HEK293 (cell line): ENCODE measurements at regions of chr18 and their contacts with region 1.

Region 1: GRCh38 chr18:59823596-59824195 is 76.1 kb upstream of the PMAIP1 start:
- H3K4me3 ChIP-seq: no peak overlapping the region
- H3K27ac ChIP-seq: no peak overlapping the region
- H3K4me1 ChIP-seq: no peaks in the 10 kb centered on the region
- CTCF ChIP-seq: peak; percentile 71

Region 2: GRCh38 chr18:59459369-59460079 is 364.2 kb before region 1 on chr18:
- CTCF ChIA-PET with region 1: interaction called, 204 read pairs
- POLR2A ChIA-PET with region 1: interaction called, 10 read pairs
- H3K4me3 ChIP-seq: no peak overlapping the region
- H3K27ac ChIP-seq: peak overlapping the region; percentile 43; the same call in 1 of the 2 replicates
- H3K4me1 ChIP-seq: peaks cover 22% of the 10 kb centered on the region
- CTCF ChIP-seq: peak; percentile 41; the same call in 1 of the 2 replicates

Region 3: GRCh38 chr18:59631583-59632181 is 192.0 kb before region 1 on chr18:
- CTCF ChIA-PET with region 1: interaction called, 148 read pairs
- POLR2A ChIA-PET with region 1: interaction called, 3 read pairs
- H3K4me3 ChIP-seq: no peak overlapping the region
- H3K27ac ChIP-seq: no peak overlapping the region
- H3K4me1 ChIP-seq: 0 out of 2 replicates have a peak, but pooled peaks cover 4% of the 10 kb centered on the region
- CTCF ChIP-seq: peak; percentile 51; the same call in 1 of the 2 replicates

Region 4: DNA sequence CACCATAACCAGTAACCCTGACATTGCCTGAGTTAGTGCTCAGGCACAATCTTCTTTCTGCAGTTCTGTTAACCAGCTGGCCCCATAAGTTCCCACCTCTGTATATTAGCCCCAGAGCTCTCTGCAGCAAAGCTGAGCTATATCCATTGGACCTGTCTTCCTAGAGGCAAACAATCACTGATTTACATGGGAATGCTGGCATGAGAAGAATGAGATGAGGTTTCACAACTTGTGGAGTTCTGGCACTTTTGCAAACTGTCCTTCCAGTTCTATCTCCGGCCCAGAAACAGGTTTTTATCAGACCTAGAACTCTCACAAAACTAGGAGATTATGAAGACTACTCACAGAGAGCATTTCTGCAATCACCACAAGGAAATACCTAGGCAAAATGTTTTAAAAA is 118.6 kb before region 1 on chr18:
- CTCF ChIA-PET with region 1: interaction called, 64 read pairs
- POLR2A ChIA-PET with region 1: no interaction called
- H3K4me3 ChIP-seq: no peak overlapping the region
- H3K27ac ChIP-seq: no peak overlapping the region
- H3K4me1 ChIP-seq: peaks cover 4% of the 10 kb centered on the region; the same call in 1 of the 2 replicates
- CTCF ChIP-seq: no peak

Region 5: DNA sequence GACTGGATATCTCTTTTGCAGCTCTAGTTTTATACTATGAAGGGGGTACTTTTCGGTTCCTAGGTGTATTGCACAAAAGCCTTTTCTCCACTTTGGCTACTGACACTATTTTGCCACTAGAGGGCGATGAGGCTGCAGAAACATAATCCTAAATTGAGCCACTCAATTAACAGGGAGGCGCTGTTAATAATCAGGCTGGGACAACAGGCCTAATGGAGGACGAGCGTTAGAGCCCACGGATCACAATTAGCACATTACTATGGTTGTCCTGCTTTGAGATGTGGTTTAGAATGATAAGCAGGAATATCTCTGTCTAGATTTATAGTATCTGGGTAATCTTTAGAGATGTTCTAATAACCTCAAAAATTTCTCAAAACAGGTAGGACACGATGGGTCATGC is 13.9 kb after region 1 on chr18:
- CTCF ChIA-PET with region 1: interaction called, 23 read pairs
- POLR2A ChIA-PET with region 1: no interaction called
- H3K4me3 ChIP-seq: no peak overlapping the region
- H3K27ac ChIP-seq: no peak overlapping the region
- H3K4me1 ChIP-seq: peaks cover 7% of the 10 kb centered on the region
- CTCF ChIP-seq: peak; percentile 92

Region 6: GRCh38 chr18:59950215-59950944 is 126.7 kb after region 1 on chr18:
- CTCF ChIA-PET with region 1: no interaction called
- POLR2A ChIA-PET with region 1: no interaction called
- H3K4me3 ChIP-seq: no peak overlapping the region
- H3K27ac ChIP-seq: no peak overlapping the region
- H3K4me1 ChIP-seq: peaks cover 5% of the 10 kb centered on the region
- CTCF ChIP-seq: no peak